ENCODE measurements at regions of chr20 and their contacts with region 1.

Region 1: GRCh38 chr20:14337400-14338171 is at the start of gene FLRT3:
- ATAC-seq: peak; percentile 96 to 100 (median 98)
- H3K4me3 ChIP-seq: peak within 1 kb of the TSS; percentile 31 to 78 (median 43)
- H3K27ac ChIP-seq: peak within 1 kb of the TSS in 1 of 2 donors; percentile 13
- H3K4me1 ChIP-seq: peaks cover 3 to 10% of the 10 kb centered on the region in 2 donors
- total RNA-seq, gene FLRT3: 1.4 to 22.1 (median 13.3) TPM

Region 2: GRCh38 chr20:13809373-13809772 is 528.2 kb before region 1 on chr20:
- in situ Hi-C with region 1: no loop called
- ATAC-seq: no peak
- H3K4me3 ChIP-seq: no peak overlapping the region
- H3K27ac ChIP-seq: no peak overlapping the region
- H3K4me1 ChIP-seq: no peaks in the 10 kb centered on the region

Region 3: DNA sequence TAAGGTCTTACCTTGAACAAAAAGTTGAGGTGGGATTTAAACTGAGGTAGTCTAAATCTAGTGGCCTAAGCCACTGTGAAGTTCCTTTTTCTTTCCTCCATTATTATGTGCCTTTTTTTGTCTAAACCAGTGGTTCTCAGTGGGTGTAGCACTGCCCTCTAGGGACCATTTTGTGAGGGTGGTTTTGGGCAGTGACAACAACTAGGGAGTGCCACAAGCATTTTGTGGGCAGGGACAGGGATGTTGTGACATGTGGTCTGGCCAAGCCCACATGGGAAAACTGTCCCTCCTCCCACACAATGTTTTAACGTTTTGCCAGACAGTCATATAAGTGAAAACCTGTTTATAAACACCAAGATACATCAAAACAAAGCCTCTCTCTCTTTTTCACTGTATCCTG is 899.2 kb after region 1 on chr20:
- in situ Hi-C with region 1: loop called in 1 of 9 experiments (anchors 25 kb)
- ATAC-seq: peak in 3 of 8 experiments; percentile 72 to 93 (median 77)
- H3K4me3 ChIP-seq: no peak overlapping the region
- H3K27ac ChIP-seq: no peak overlapping the region
- H3K4me1 ChIP-seq: peaks cover 4 to 8% of the 10 kb centered on the region in 2 donors

Region 4: DNA sequence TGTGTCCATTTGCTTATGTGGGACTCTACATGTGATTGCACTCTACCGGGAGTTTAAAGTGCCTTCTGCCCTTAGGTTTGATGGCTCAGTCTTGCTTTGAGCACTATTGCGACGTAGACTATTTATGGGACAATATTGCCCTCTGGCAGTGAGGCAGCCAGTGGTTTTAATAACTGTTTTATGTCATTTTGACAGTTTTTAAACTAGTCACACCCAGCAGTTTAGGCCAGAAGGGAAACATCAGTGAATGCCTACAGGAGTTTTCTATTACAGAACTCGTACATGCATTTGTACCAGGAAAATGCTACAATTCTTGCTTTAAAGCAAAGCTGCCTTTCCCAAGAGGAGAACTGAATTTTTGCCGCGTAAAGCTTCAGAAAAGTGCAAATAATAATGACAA is 1422.0 kb after region 1 on chr20:
- in situ Hi-C with region 1: loop called in 1 of 9 experiments (anchors 25 kb)
- ATAC-seq: peak in 5 of 8 experiments; percentile 44 to 86 (median 54)
- H3K4me3 ChIP-seq: no peak overlapping the region
- H3K27ac ChIP-seq: no peak overlapping the region
- H3K4me1 ChIP-seq: no peaks in the 10 kb centered on the region

Measured in motor neuron (in vitro differentiated cells).